ENCODE measurements at regions of chr2 and their contacts with region 1.

Region 1: DNA sequence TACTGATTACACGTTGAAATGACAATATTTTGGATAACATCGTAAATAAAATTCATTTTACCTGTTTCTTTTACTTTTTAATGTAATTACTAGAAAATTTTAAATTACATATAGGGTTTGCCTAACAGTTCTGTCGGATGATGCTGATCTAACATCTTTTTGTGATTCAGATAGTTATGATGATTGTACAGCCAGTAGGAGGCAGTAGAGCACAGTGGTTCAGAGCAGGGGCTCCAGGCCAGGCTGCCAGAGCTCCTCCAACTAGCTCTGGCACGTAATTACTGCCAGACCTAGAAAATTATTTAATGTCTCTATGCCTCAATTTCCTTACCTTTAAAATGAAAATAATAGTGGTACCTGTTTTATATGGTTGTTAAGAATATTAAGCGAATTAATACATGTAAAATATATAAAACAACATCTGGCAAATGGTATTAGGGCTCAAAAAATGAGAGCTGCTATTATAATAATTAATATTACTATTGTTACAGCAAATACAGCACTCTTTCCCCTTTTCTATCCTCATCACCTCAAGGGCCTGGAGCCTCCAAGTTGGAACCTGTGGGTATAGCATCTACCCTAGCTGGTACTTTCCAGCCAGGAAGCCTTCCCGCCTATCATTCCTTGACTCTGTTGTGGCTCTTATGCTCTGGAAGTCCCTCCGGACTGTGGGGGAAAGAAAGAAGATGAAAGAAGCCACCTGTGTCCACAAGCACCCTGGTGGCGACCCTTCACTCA is 47.7 kb upstream of the PLA2R1 start:
- DNase-seq: peak; percentile 90
- H3K4me3 ChIP-seq: no peak overlapping the region
- H3K27ac ChIP-seq: no peak overlapping the region
- H3K4me1 ChIP-seq: peaks cover 5% of the 10 kb centered on the region; the same call in 1 of the 2 replicates
- H3K27me3 ChIP-seq: no peaks in the 10 kb centered on the region

Region 2: DNA sequence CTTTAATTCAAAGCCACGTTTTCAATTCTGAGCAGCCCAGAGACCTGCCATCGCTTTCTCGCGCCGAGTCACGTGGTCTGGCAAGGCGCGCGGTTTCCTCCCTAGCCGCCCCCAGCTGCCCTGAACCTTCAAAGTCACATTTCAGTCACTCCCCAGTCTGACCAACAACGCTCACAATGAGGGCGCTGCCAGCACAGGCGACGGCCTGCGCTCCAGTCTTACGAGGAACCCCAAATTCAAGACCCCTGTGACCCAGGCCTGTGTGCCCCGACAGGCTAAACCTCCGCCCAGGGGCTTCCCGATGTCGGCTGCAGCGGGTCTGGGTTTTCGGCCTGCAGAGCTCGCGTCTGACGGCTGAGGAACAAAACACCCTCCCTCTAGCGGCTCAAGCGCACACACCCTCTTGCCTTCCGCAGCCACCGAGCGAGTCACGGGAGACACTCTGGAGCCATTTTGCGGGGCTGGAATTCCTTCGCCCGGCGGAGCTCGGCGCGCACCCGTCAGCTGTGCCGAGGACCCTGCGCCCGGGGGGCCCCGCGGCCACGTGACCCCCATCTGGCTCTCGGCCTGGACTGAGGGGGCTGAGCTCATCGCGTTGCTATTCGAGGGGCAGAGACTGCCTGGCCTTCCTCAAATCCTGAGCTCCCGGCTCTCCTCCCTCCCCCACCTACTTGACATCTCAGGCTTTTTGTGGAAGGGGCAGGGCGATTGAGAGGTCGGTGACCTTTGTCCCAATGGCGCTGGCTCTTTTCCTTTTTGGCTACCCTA is 159.9 kb after region 1 on chr2:
- in situ Hi-C with region 1: loop called (anchors 25 kb)
- DNase-seq: peak; percentile 95
- H3K4me3 ChIP-seq: peak overlapping the region; percentile 57
- H3K27ac ChIP-seq: peak overlapping the region; percentile 81
- H3K4me1 ChIP-seq: peaks cover 38% of the 10 kb centered on the region
- H3K27me3 ChIP-seq: no peaks in the 10 kb centered on the region

Region 3: DNA sequence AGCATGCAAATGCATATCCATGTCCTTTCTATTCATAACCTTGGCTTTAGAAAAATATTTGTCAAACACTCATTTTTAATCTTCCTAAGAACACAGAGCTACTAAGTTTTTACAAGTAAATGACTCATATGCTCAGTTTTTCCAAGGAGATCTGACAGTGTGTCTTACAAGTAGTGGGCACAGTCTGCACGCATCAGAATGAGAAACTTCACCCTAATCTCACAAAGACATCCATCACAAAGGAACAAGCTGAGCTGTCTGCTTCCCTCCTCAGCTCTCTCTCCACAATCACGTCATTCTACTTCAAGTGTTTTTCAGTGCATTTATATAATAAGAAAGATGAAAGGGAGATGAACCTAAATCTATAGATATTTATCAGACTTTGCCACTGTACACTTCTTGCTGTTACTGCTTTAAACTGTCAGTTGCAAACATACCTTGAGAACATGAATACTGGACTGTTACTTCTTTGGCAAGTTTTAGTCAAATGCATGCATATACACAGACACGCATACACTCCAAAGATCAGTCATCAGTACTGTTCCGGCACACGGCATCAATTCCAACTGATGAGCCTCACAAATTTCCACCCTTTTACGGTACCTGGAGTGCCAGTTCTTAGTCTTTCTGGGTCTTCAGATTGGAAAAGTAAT is 307.8 kb after region 1 on chr2:
- in situ Hi-C with region 1: no loop called
- DNase-seq: peak; percentile 91
- H3K4me3 ChIP-seq: peak overlapping the region; percentile 42
- H3K27ac ChIP-seq: peak overlapping the region; percentile 91
- H3K4me1 ChIP-seq: peaks cover 72% of the 10 kb centered on the region
- H3K27me3 ChIP-seq: no peaks in the 10 kb centered on the region

Region 4: DNA sequence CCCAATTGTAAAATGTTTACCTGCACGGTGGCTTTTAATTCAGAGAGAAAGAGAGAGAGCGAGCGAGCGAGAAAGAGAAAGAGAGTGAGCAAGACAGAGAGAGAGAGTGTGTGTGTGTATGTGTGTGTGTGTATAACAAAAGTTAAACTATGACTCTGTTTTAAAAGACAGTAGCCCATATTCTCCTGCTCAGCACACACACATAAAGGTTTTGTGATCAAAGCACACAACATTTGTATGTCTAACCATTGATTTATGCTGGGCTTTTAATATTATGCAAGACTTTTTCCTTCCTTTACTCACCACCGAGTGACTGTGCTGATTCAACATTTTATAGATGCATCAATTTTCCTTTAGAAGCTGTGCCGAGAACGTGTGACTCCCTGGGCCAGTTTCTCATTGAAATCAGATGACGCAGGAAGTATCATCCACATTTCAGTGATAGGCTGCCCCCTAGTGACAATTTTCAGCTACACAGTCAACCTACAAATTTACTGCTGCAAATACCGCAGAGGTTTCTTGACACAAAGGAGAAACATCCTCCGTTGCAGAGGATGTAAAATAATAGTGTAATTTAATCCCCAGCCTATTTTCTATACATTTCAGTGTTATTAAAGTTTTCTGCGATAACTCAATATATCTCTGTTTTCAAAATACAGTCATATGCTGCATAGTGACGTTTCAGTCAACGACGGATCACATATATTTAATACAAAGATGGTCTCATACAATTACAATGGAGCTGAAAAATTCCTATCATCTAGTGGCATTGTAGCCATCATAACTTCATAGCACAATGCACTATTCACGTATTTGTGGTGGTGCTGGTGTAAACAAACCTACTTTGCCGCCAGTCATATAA is 884.3 kb after region 1 on chr2:
- in situ Hi-C with region 1: loop called (anchors 10 kb)
- DNase-seq: peak; percentile 96
- H3K4me3 ChIP-seq: no peak overlapping the region
- H3K27ac ChIP-seq: peak overlapping the region; percentile 26
- H3K4me1 ChIP-seq: peaks cover 4% of the 10 kb centered on the region
- H3K27me3 ChIP-seq: no peaks in the 10 kb centered on the region